ENCODE measurements at regions of chr1 and their contacts with region 1.

Region 1: DNA sequence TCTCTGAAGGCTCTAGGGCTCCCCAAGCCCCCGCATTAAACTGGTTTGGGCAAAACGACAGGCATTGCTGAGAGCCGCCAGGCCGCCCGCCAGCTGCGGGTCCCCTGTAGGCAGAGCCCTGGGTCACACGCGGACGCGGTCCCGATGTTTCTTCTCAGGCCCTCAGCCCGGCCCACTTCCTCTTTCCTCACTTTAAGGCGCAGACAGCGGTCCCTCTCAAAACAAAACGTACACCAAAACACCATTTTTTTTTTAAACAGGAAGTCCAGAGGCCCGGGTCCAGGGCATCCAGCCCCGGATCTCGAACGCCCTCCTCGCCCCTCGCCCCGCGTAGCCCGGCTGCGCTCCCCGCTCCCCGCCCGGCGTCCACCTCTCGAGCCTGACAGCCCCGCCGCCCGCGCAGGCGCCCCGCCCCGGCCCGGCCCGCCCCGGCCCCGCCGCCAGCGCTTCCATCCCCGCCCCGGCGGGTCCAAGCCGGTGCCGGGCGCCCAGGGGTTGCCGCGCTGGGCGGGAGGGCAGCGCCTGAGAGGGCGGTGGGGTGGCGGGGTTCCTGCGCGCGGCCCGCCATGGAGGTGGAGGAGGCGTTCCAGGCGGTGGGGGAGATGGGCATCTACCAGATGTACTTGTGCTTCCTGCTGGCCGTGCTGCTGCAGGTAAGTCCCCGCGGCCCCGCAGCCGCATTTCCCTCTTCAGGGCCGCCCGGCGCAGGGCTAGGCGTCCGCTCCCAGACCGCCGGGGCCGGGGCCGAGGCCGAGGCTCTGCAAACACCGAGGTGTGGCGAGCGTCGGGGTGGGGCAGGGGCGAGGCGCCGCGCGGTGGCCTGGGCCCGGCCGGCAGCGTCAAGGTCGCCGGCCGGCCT is at the start of gene SLC22A15:
- DNase-seq: peak; percentile 36 to 94 (median 56)

Region 2: GRCh38 chr1:115839029-115839678 is 137.1 kb before region 1 on chr1:
- intact Hi-C with region 1: loop called (anchors 5 kb)
- DNase-seq: peak; percentile 30 to 92 (median 54)

Measured in posterior cingulate gyrus (tissue), 11 donors.